Motor neuron (in vitro differentiated cells): ENCODE measurements at regions of chr17 and their contacts with region 1.

Region 1: DNA sequence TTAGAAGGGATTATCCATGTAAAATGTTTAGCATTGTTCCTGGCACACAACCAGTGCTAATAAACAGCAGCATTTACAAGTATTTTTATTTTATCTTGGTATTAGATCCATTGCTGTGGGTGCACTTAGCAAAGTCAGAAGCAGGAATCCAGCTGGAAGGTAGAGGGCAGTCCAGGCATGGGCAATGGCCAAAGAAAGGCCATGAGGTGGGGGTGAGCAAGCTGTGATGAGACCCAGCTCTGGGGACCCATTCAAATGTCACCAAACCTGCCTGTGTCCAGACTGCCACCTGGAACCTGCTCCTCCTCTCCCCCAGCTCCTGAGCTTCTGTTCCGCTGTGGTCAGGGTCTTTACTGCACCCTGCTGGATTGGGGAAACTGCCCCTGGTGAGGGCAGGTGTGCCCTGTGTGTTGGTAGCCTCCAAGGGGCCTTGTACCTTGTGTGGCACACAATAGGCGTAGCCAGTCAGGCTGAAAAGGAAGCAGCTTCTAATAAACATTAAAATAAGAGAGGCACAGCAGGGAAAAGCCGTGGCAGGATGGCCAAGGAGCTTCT is 118.0 kb upstream of the CRHR1 start:
- ATAC-seq: no peak
- H3K4me3 ChIP-seq: no peak overlapping the region
- H3K27ac ChIP-seq: no peak overlapping the region
- H3K4me1 ChIP-seq: no peaks in the 10 kb centered on the region

Region 2: DNA sequence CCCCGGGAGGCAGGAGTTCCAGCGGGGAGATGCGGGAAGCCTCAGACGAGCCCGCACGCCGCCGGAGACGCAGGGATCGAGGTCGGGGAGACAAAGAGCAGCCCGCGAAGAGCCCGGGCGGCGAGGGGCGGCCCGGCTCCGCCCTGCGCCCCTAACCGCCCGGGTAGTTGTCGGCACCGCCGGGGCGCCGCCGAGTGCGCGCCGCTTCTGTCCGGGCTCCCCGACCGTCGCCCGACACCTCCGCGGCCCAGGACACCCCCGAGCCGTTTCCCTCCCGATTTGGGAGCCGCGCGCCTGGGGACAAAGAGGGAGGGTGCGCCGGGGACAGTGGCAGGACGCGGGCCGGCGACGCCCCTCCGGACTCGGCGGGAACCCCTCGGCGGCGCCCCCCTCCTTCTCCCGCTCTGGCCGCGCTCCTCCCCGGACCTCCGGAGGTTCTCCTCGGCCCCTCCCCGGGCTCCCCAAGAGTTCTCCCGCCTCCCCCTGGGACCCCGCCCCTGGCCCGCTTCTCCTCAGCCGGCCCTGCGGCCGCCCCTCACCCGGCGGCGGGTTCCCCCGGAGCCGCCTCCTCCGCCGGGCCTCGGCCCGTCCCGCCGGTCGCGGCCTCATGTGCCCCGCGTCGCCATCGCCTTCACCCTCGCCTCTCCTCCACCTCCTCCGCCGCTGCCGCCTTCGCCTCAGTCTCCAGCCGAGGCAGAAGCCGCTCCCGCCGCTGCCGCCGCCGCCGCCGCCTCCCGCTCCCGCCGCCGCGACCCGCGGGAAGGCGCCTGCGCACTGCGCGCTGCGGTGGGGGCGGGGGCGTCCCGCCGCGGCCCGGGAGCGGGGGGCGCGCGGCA is 836.4 kb before region 1 on chr17 and contains the start of gene GJC1:
- in situ Hi-C with region 1: no loop called
- ATAC-seq: peak; percentile 60 to 79 (median 72)
- H3K4me3 ChIP-seq: peak within 1 kb of the TSS; percentile 50 to 93 (median 89)
- H3K27ac ChIP-seq: peak within 1 kb of the TSS in 1 of 2 donors; percentile 19
- H3K4me1 ChIP-seq: peaks cover 3 to 6% of the 10 kb centered on the region in 2 donors
- total RNA-seq, gene GJC1: 1.4 to 43.0 (median 9.0) TPM

Region 3: GRCh38 chr17:45719335-45720071 is 53.4 kb after region 1 on chr17:
- in situ Hi-C with region 1: loop called in 1 of 9 experiments (anchors 10 kb)
- ATAC-seq: peak in 7 of 8 experiments; percentile 27 to 100 (median 67)
- H3K4me3 ChIP-seq: no peak overlapping the region
- H3K27ac ChIP-seq: no peak overlapping the region
- H3K4me1 ChIP-seq: no peaks in the 10 kb centered on the region

Region 4: DNA sequence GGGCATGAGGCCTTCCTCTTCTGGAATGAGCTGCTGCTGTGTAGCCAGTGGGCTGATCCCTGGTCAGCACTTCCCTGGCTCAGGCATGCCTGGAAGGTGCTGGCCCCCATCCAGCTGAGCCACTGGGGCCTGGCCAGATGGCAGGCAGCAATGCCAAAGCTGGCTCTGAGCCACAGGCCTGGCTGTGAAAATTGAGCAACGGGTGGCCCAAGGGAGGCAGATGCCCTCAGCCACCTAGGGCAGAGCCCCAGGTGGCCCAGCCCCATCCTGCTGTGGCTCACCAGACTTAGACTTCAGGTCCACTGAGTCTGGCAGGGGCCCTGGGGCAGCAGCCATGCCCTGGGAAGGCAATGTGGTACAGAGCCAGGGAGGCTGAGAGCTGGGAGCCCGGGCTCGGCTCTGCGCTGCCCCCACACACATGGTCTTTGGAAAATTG is 109.5 kb after region 1 on chr17:
- in situ Hi-C with region 1: no loop called
- ATAC-seq: peak in 2 of 8 experiments; percentile 59 to 62
- H3K4me3 ChIP-seq: no peak overlapping the region
- H3K27ac ChIP-seq: no peak overlapping the region
- H3K4me1 ChIP-seq: peaks cover 17 to 21% of the 10 kb centered on the region in 2 donors